Psoas muscle (tissue), 8 donors: ENCODE measurements at regions of chr12 and their contacts with region 1.

Region 1: GRCh38 chr12:109951751-109952150 is 44.4 kb downstream of the GIT2 start:
- DNase-seq: peak; percentile 62 to 75
- ATAC-seq: peak; percentile 67 to 88 (median 80)
- H3K4me3 ChIP-seq: no peak overlapping the region
- H3K27ac ChIP-seq: peak overlapping the region; percentile 68
- H3K4me1 ChIP-seq: peaks cover 54% of the 10 kb centered on the region
- H3K27me3 ChIP-seq: no peaks in the 10 kb centered on the region
- CTCF ChIP-seq: no peak

Region 2: DNA sequence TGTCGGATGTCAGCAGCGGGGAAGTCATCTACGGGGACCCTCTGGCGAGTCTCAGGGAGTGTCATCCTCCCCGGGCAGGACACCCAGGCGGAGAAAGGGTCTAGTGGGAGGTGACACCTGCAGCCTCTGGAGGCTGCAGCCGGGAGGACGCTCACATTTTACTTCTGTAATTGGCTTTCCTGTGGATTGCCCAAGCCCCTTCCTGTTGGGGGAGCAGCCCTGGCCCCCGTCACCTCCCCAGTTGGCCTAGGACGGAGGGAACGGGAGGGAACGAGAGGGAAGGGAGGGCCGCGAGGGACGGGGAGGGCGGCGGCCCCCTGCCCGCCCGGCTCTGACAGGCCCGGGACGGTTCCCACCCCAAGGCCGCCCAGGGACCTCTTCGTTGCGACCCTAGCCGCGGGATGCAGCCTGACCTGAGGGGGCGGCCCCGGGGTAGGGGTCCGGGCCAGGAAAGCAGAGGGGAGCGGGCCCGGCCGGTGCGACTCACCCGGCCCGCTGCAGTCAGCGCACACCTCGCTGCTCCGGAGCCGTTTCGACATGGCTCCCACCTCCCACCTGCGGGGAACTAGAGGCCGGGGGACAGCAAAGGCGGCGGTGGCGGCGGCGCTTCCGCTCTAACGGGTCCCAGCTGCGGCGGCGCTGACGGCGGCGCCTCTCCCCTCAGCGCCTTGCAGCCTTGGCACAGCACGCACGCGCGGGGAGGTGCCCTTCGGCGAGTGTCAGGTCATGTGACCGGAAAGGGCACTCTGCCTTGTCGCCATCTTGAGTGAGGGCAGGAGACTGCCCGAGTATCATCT is 44.1 kb after region 1 on chr12 and contains the start of gene GIT2:
- intact Hi-C with region 1: loop called in 1 of 2 experiments (anchors 5 kb)
- DNase-seq: peak; percentile 95 to 97
- ATAC-seq: peak; percentile 89 to 92 (median 90)
- H3K4me3 ChIP-seq: peak within 1 kb of the TSS; percentile 95
- H3K27ac ChIP-seq: peak within 1 kb of the TSS; percentile 87
- H3K4me1 ChIP-seq: peaks cover 36% of the 10 kb centered on the region
- H3K27me3 ChIP-seq: no peaks in the 10 kb centered on the region
- CTCF ChIP-seq: no peak
- total RNA-seq, gene GIT2: 17.5 to 29.7 (median 26.4) TPM